ENCODE measurements at regions of chr14 and their contacts with region 1.

Region 1: GRCh38 chr14:24678801-24679247 is 44.8 kb upstream of the GZMB start:
- DNase-seq: peak; percentile 82
- H3K4me3 Mint-ChIP-seq: peak overlapping the region; percentile 71
- H3K27ac Mint-ChIP-seq: peak overlapping the region; percentile 40
- H3K4me1 Mint-ChIP-seq: peaks cover 5% of the 10 kb centered on the region
- H3K27me3 Mint-ChIP-seq: peaks cover 75% of the 10 kb centered on the region
- CTCF ChIP-seq: peak; percentile 96

Region 2: GRCh38 chr14:24481622-24482324 is 197.1 kb before region 1 on chr14:
- CTCF ChIA-PET with region 1: no interaction called
- POLR2A ChIA-PET with region 1: no interaction called
- intact Hi-C with region 1: loop called (anchors 1 kb)
- DNase-seq: peak; percentile 51
- H3K4me3 Mint-ChIP-seq: no peak overlapping the region
- H3K27ac Mint-ChIP-seq: no peak overlapping the region
- H3K4me1 Mint-ChIP-seq: no peaks in the 10 kb centered on the region
- H3K27me3 Mint-ChIP-seq: no peaks in the 10 kb centered on the region
- CTCF ChIP-seq: peak; percentile 50

Region 3: GRCh38 chr14:24605435-24606190 is 73.2 kb before region 1 on chr14:
- CTCF ChIA-PET with region 1: interaction called, 3 read pairs
- POLR2A ChIA-PET with region 1: no interaction called
- intact Hi-C with region 1: loop called (anchors 5 kb)
- DNase-seq: peak; percentile 24
- H3K4me3 Mint-ChIP-seq: no peak overlapping the region
- H3K27ac Mint-ChIP-seq: no peak overlapping the region
- H3K4me1 Mint-ChIP-seq: no peaks in the 10 kb centered on the region
- H3K27me3 Mint-ChIP-seq: peaks cover 11% of the 10 kb centered on the region
- CTCF ChIP-seq: peak; percentile 74

Region 4: DNA sequence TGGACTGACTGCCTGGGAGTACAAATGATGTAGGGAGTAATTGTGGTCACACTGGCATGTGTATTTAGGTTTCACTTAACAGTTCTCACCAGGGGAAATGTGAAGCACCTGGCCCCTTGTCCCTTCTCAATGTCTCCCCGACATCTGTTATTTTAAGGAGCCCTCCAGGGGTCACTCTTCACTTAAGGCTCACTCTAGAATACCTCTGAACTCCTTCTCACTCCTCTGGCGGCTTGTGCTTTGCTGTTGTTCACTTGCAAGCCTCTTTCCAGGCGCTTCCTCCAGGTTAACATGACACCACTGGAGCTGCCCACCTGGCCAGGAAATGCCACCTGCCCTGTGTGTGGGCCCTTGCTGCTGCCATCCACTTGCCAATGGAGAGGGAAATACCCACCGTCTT is 11.7 kb after region 1 on chr14:
- CTCF ChIA-PET with region 1: interaction called, 17 read pairs
- POLR2A ChIA-PET with region 1: no interaction called
- intact Hi-C with region 1: no loop called
- DNase-seq: no peak
- H3K4me3 Mint-ChIP-seq: no peak overlapping the region
- H3K27ac Mint-ChIP-seq: no peak overlapping the region
- H3K4me1 Mint-ChIP-seq: peaks cover 5% of the 10 kb centered on the region
- H3K27me3 Mint-ChIP-seq: peaks cover 4% of the 10 kb centered on the region
- CTCF ChIP-seq: no peak

Measured in MCF 10A (cell line).